Endothelial cell of umbilical vein (primary cell): ENCODE measurements at regions of chr1 and their contacts with region 1.

Region 1: GRCh38 chr1:64469977-64470664 is at the start of gene CACHD1:
- DNase-seq: peak; percentile 88
- H3K4me3 ChIP-seq: peak within 1 kb of the TSS; percentile 60 to 83 (median 78)
- H3K27ac ChIP-seq: peak within 1 kb of the TSS; percentile 48
- H3K4me1 ChIP-seq: peaks cover 23% of the 10 kb centered on the region
- H3K27me3 ChIP-seq: peaks cover 2 to 4% of the 10 kb centered on the region in 2 experiments
- CTCF ChIP-seq: peak; percentile 6 to 51
- POLR2A ChIP-seq: peak; percentile 67
- total RNA-seq, gene CACHD1: 8.7 and 9.3 TPM in 2 replicates

Region 2: DNA sequence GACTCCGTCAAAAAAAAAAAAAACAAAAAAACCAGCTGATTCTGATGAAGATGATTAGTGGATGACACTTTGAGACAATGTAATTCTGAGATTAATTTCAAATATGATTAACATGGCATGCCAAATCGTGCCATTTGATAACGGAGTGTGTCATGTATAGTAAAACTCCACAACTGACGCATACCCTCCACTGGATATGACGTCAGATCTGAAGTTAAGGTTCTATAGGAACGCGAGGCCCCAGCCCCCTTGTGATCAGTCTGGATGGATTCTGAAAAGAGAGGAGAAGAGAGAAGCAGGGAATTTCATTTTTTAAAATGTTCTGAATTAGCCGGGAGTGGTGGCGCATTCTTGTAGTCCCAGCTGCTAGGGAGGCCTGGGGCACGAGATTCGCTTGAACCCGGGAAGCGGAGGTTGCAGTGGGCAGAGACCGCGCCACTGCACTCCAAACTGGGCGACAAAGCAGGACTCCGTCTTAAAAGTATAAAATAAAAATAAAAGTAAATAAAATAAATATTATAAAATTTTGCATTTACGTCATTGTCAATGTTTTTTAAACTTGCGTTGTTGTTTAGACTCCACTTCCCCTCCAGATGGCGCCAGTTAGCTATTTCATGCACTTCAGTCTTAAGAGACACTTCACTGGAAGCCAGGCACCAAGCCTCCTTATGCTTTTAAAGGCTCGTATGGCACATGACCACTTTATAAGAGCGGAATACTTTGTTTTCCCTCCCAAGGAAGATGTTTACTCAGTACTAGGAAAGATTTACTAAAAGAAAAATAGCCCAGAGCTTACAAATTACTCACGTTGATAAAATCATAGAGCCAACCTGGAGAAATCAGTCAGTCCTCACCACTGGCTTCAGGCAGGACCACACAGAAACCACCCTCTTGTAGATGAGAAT is 201.2 kb before region 1 on chr1:
- CTCF ChIA-PET with region 1: interaction called, 3 read pairs
- POLR2A ChIA-PET with region 1: no interaction called
- dilution Hi-C with region 1: no loop called
- intact Hi-C with region 1: loop called (anchors 1 kb)
- DNase-seq: peak; percentile 76
- H3K4me3 ChIP-seq: no peak overlapping the region
- H3K27ac ChIP-seq: no peak overlapping the region
- H3K4me1 ChIP-seq: peaks cover under 1% of the 10 kb centered on the region
- H3K27me3 ChIP-seq: peaks cover 0 to 5% of the 10 kb centered on the region in 2 experiments
- CTCF ChIP-seq: peak; percentile 49 to 58
- POLR2A ChIP-seq: no peak

Region 3: DNA sequence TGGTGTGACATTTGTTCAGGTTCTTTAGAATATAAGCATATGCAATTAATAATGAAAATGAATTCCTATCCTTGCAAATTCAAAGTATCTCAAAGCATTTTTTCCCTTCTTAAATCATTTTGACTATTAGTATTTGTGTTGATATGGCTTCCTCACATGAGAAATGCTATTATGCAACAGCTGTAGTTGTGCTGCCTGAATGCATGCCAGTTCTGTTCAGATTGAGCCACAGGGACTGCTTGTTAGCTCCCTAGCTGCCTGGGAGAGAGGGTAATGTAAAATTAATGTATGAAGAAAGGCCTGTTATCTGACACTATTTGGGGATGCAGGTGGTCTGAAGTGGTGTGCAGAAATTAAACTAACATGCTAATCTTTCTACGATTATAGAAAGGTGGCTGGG is 45.3 kb after region 1 on chr1:
- CTCF ChIA-PET with region 1: no interaction called
- POLR2A ChIA-PET with region 1: no interaction called
- dilution Hi-C with region 1: no loop called
- intact Hi-C with region 1: loop called (anchors 2 kb)
- DNase-seq: no peak
- H3K4me3 ChIP-seq: no peak overlapping the region
- H3K27ac ChIP-seq: no peak overlapping the region
- H3K4me1 ChIP-seq: peaks cover 31% of the 10 kb centered on the region
- H3K27me3 ChIP-seq: no peaks in the 10 kb centered on the region
- CTCF ChIP-seq: no peak
- POLR2A ChIP-seq: no peak

Region 4: GRCh38 chr1:64584479-64584878 is 114.4 kb after region 1 on chr1:
- CTCF ChIA-PET with region 1: no interaction called
- POLR2A ChIA-PET with region 1: no interaction called
- dilution Hi-C with region 1: no loop called
- intact Hi-C with region 1: loop called (anchors 2 kb)
- DNase-seq: peak; percentile 26
- H3K4me3 ChIP-seq: no peak overlapping the region
- H3K27ac ChIP-seq: no peak overlapping the region
- H3K4me1 ChIP-seq: no peaks in the 10 kb centered on the region
- H3K27me3 ChIP-seq: no peaks in the 10 kb centered on the region
- CTCF ChIP-seq: peak in 1 of 2 donors; percentile 26
- POLR2A ChIP-seq: no peak

Region 5: GRCh38 chr1:64686828-64687724 is 217.0 kb after region 1 on chr1:
- CTCF ChIA-PET with region 1: no interaction called
- POLR2A ChIA-PET with region 1: no interaction called
- dilution Hi-C with region 1: no loop called
- intact Hi-C with region 1: loop called (anchors 2 kb)
- DNase-seq: peak; percentile 88
- H3K4me3 ChIP-seq: peak overlapping the region in 1 of 3 experiments; percentile 22
- H3K27ac ChIP-seq: peak overlapping the region; percentile 95
- H3K4me1 ChIP-seq: peaks cover 31% of the 10 kb centered on the region
- H3K27me3 ChIP-seq: no peaks in the 10 kb centered on the region
- CTCF ChIP-seq: peak; percentile 67 to 73
- POLR2A ChIP-seq: no peak